Naive thymus-derived CD4-positive, alpha-beta T cell (primary cell): ENCODE measurements at regions of chr1 and their contacts with region 1.

Region 1: GRCh38 chr1:45303582-45304310 is 22.9 kb upstream of the HPDL start:
- DNase-seq: peak; percentile 86 to 96 (median 93)
- ATAC-seq: peak; percentile 94
- H3K4me3 ChIP-seq: peak overlapping the region; percentile 95
- H3K4me3 Mint-ChIP-seq: peak overlapping the region; percentile 89 to 96 (median 92)
- H3K27ac ChIP-seq: peak overlapping the region; percentile 88
- H3K27ac Mint-ChIP-seq: peak overlapping the region; percentile 90 to 97 (median 95)
- H3K4me1 ChIP-seq: peaks cover 7 to 9% of the 10 kb centered on the region in 2 donors
- H3K4me1 Mint-ChIP-seq: peaks cover 6 to 32% (median 26%) of the 10 kb centered on the region in 7 donors
- H3K27me3 ChIP-seq: no peaks in the 10 kb centered on the region
- H3K27me3 Mint-ChIP-seq: no peaks in the 10 kb centered on the region

Region 2: GRCh38 chr1:44721485-44722361 is 582.0 kb before region 1 on chr1:
- CTCF ChIA-PET with region 1: no interaction called
- POLR2A ChIA-PET with region 1: interaction called, 13 read pairs
- intact Hi-C with region 1: no loop called
- DNase-seq: peak in 8 of 9 donors; percentile 62 to 84 (median 72)
- ATAC-seq: peak; percentile 92
- H3K4me3 ChIP-seq: peak overlapping the region; percentile 15
- H3K4me3 Mint-ChIP-seq: peak overlapping the region; percentile 53 to 87 (median 80)
- H3K27ac ChIP-seq: peak overlapping the region; percentile 64
- H3K27ac Mint-ChIP-seq: peak overlapping the region; percentile 74 to 98 (median 95)
- H3K4me1 ChIP-seq: peaks cover 26 to 73% of the 10 kb centered on the region in 2 donors
- H3K4me1 Mint-ChIP-seq: peaks cover 52 to 85% (median 74%) of the 10 kb centered on the region in 7 donors
- H3K27me3 ChIP-seq: no peaks in the 10 kb centered on the region
- H3K27me3 Mint-ChIP-seq: no peaks in the 10 kb centered on the region

Region 3: GRCh38 chr1:44775078-44775929 is 528.4 kb before region 1 on chr1 and contains the start of gene RPS8:
- CTCF ChIA-PET with region 1: no interaction called
- POLR2A ChIA-PET with region 1: interaction called, 7 read pairs
- intact Hi-C with region 1: loop called (anchors 1 kb)
- DNase-seq: peak; percentile 77 to 92 (median 90)
- ATAC-seq: peak; percentile 91
- H3K4me3 ChIP-seq: peak within 1 kb of the TSS; percentile 99
- H3K4me3 Mint-ChIP-seq: peak within 1 kb of the TSS; percentile 88 to 99 (median 92)
- H3K27ac ChIP-seq: peak within 1 kb of the TSS; percentile 89
- H3K27ac Mint-ChIP-seq: peak within 1 kb of the TSS; percentile 91 to 98 (median 94)
- H3K4me1 ChIP-seq: peaks cover 6 to 19% of the 10 kb centered on the region in 2 donors
- H3K4me1 Mint-ChIP-seq: peaks cover 20 to 45% (median 38%) of the 10 kb centered on the region in 7 donors
- H3K27me3 ChIP-seq: no peaks in the 10 kb centered on the region
- H3K27me3 Mint-ChIP-seq: no peaks in the 10 kb centered on the region
- total RNA-seq, gene RPS8: 2,000 to 3,409 (median 3,025) TPM

Region 4: GRCh38 chr1:44985747-44986359 is 317.9 kb before region 1 on chr1:
- CTCF ChIA-PET with region 1: no interaction called
- POLR2A ChIA-PET with region 1: interaction called, 6 read pairs
- intact Hi-C with region 1: loop called (anchors 1 kb)
- DNase-seq: no peak
- ATAC-seq: no peak
- H3K4me3 ChIP-seq: peak overlapping the region; percentile 77
- H3K4me3 Mint-ChIP-seq: peak overlapping the region; percentile 90 to 100 (median 98)
- H3K27ac ChIP-seq: peak overlapping the region; percentile 68
- H3K27ac Mint-ChIP-seq: peak overlapping the region; percentile 75 to 99 (median 92)
- H3K4me1 ChIP-seq: peaks cover 8 to 13% of the 10 kb centered on the region in 2 donors
- H3K4me1 Mint-ChIP-seq: peaks cover 7 to 39% (median 23%) of the 10 kb centered on the region in 7 donors
- H3K27me3 ChIP-seq: no peaks in the 10 kb centered on the region
- H3K27me3 Mint-ChIP-seq: no peaks in the 10 kb centered on the region

Region 5: DNA sequence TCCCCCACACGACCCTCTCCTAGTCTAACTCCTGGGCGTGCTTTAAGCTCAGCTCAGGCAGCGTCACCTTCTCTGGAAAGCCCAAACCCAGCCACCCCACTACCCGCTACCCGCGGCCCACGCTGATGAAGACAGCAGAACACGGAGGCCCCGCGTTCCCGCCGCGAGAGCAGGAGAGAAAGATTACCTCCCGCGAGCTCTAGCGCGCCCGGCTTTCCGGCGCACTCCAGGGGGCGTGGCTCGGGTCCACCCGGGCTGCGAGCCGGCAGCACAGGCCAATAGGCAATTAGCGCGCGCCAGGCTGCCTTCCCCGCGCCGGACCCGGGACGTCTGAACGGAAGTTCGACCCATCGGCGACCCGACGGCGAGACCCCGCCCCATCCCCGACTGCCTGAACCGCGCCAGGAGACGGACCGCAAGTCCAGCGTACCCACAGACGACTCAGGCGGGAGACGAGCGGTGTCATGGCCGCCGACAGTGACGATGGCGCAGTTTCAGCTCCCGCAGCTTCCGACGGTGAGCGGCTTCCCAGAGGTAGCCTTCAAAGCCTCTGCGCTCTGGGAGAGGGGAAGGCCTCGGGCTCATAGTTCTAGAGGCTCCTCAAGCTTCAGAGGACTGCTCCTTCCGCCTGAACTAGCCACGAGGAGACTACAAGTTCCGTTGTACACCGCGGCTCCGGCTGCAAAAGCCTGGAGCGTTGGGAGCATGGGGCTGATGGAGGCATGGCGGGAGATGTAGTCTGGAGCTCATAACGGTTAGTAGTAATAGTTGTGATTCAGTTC is 36.2 kb after region 1 on chr1 and contains the starts of genes MUTYH and TOE1:
- CTCF ChIA-PET with region 1: interaction called, 9 read pairs
- POLR2A ChIA-PET with region 1: interaction called, 85 read pairs
- intact Hi-C with region 1: loop called (anchors 1 kb)
- DNase-seq: peak; percentile 84 to 95 (median 89)
- ATAC-seq: peak; percentile 91
- H3K4me3 ChIP-seq: peak within 1 kb of the TSS; percentile 83
- H3K4me3 Mint-ChIP-seq: peak within 1 kb of the TSS; percentile 95 to 100 (median 99)
- H3K27ac ChIP-seq: peak within 1 kb of the TSS; percentile 99
- H3K27ac Mint-ChIP-seq: peak within 1 kb of the TSS; percentile 96 to 99 (median 99)
- H3K4me1 ChIP-seq: peaks cover 31 to 33% of the 10 kb centered on the region in 2 donors
- H3K4me1 Mint-ChIP-seq: peaks cover 24 to 75% (median 61%) of the 10 kb centered on the region in 7 donors
- H3K27me3 ChIP-seq: no peaks in the 10 kb centered on the region
- H3K27me3 Mint-ChIP-seq: no peaks in the 10 kb centered on the region
- total RNA-seq, gene MUTYH: 56.7 to 85.4 (median 67.7) TPM
- total RNA-seq, gene TOE1: 20.6 to 53.3 (median 25.7) TPM

Region 6: GRCh38 chr1:45803301-45803780 is 499.6 kb after region 1 on chr1 and contains the start of gene MAST2:
- CTCF ChIA-PET with region 1: no interaction called
- POLR2A ChIA-PET with region 1: no interaction called
- intact Hi-C with region 1: loop called in 1 of 2 experiments (anchors 10 kb)
- DNase-seq: peak; percentile 53 to 95 (median 71)
- ATAC-seq: peak; percentile 98
- H3K4me3 ChIP-seq: peak within 1 kb of the TSS; percentile 65
- H3K4me3 Mint-ChIP-seq: peak within 1 kb of the TSS; percentile 87 to 100 (median 92)
- H3K27ac ChIP-seq: peak within 1 kb of the TSS; percentile 41
- H3K27ac Mint-ChIP-seq: peak within 1 kb of the TSS; percentile 10 to 87 (median 77)
- H3K4me1 ChIP-seq: peaks cover 0 to 7% of the 10 kb centered on the region in 2 donors
- H3K4me1 Mint-ChIP-seq: peaks cover 21 to 33% (median 26%) of the 10 kb centered on the region in 7 donors
- H3K27me3 ChIP-seq: no peaks in the 10 kb centered on the region
- H3K27me3 Mint-ChIP-seq: no peaks in the 10 kb centered on the region
- total RNA-seq, gene MAST2: 4.9 to 22.7 (median 7.1) TPM